GM12878 (cell line): ENCODE measurements at regions of chr12 and their contacts with region 1.

Region 1: DNA sequence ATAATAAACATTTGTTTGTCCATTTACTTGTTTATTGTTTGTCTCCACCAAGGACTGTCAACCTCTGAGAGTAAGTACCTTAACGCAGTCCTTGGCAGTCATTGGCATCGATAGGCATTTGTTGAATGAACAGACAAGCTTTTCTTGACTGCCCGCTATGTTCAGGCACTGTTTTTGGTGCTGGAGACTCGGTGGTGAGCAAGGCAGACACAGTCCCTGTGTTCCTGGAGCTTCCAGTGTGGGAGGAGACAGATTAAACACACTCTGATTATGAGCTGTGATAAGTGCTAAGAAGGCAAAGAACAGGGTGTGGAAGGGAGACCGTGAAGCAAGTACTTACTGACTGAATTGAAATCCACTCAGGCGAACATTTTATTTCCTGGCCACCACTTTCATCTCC is 1.2 kb downstream of the ATP6V0A2 start:
- DNase-seq: no peak
- ATAC-seq: peak; percentile 9
- H3K4me3 ChIP-seq: peak overlapping the region; percentile 84
- H3K27ac ChIP-seq: peak overlapping the region; percentile 91
- H3K4me1 ChIP-seq: peaks cover 15% of the 10 kb centered on the region
- H3K27me3 ChIP-seq: no peaks in the 10 kb centered on the region
- CTCF ChIP-seq: no peak
- EP300 ChIP-seq: no peak
- POLR2A ChIP-seq: no peak
- RAD21 ChIP-seq: no peak

Region 2: GRCh38 chr12:123633379-123634141 is 79.8 kb before region 1 on chr12 and contains the starts of genes EIF2B1 and GTF2H3:
- CTCF ChIA-PET with region 1: interaction called, 6 read pairs
- POLR2A ChIA-PET with region 1: interaction called, 8 read pairs
- RAD21 ChIA-PET with region 1: interaction called, 6 read pairs
- SMC1A ChIA-PET with region 1: interaction called, 9 read pairs
- in situ Hi-C with region 1: no loop called
- intact Hi-C with region 1: loop called (anchors 2 kb)
- DNase-seq: peak; percentile 92
- ATAC-seq: peak; percentile 98
- H3K4me3 ChIP-seq: peak within 1 kb of the TSS; percentile 97
- H3K27ac ChIP-seq: peak within 1 kb of the TSS; percentile 87
- H3K4me1 ChIP-seq: no peaks in the 10 kb centered on the region
- H3K27me3 ChIP-seq: no peaks in the 10 kb centered on the region
- CTCF ChIP-seq: no peak
- EP300 ChIP-seq: peak in 1 of 2 experiments; percentile 61; a peak in 1 of 4 replicates
- POLR2A ChIP-seq: peak; percentile 98
- RAD21 ChIP-seq: no peak; the same call in 1 of the 2 replicates
- polyA plus RNA-seq, gene EIF2B1: 17.6 to 25.9 TPM
- polyA plus RNA-seq, gene GTF2H3: 20.6 to 31.1 TPM

Region 3: GRCh38 chr12:123655420-123655819 is 58.0 kb before region 1 on chr12:
- CTCF ChIA-PET with region 1: interaction called, 9 read pairs
- POLR2A ChIA-PET with region 1: interaction called, 56 read pairs
- RAD21 ChIA-PET with region 1: interaction called, 26 read pairs
- SMC1A ChIA-PET with region 1: interaction called, 32 read pairs
- in situ Hi-C with region 1: no loop called
- intact Hi-C with region 1: loop called (anchors 5 kb)
- DNase-seq: peak; percentile 48
- ATAC-seq: peak; percentile 97
- H3K4me3 ChIP-seq: no peak overlapping the region
- H3K27ac ChIP-seq: peak overlapping the region; percentile 67
- H3K4me1 ChIP-seq: peaks cover 33% of the 10 kb centered on the region
- H3K27me3 ChIP-seq: no peaks in the 10 kb centered on the region
- CTCF ChIP-seq: no peak
- EP300 ChIP-seq: no peak; a peak in 1 of 4 replicates
- POLR2A ChIP-seq: no peak
- RAD21 ChIP-seq: no peak

Region 4: GRCh38 chr12:123723765-123724164 is 10.4 kb after region 1 on chr12:
- CTCF ChIA-PET with region 1: interaction called, 3 read pairs
- POLR2A ChIA-PET with region 1: interaction called, 17 read pairs
- RAD21 ChIA-PET with region 1: interaction called, 8 read pairs
- SMC1A ChIA-PET with region 1: interaction called, 28 read pairs
- in situ Hi-C with region 1: no loop called
- intact Hi-C with region 1: no loop called
- DNase-seq: no peak
- ATAC-seq: peak; percentile 69
- H3K4me3 ChIP-seq: no peak overlapping the region
- H3K27ac ChIP-seq: peak overlapping the region; percentile 50
- H3K4me1 ChIP-seq: peaks cover 6% of the 10 kb centered on the region; the same call in 1 of the 2 replicates
- H3K27me3 ChIP-seq: no peaks in the 10 kb centered on the region
- CTCF ChIP-seq: no peak
- EP300 ChIP-seq: no peak
- POLR2A ChIP-seq: no peak
- RAD21 ChIP-seq: no peak

Region 5: GRCh38 chr12:123733229-123733628 is 19.8 kb after region 1 on chr12:
- CTCF ChIA-PET with region 1: no interaction called
- POLR2A ChIA-PET with region 1: interaction called, 7 read pairs
- RAD21 ChIA-PET with region 1: interaction called, 10 read pairs
- SMC1A ChIA-PET with region 1: interaction called, 23 read pairs
- in situ Hi-C with region 1: no loop called
- intact Hi-C with region 1: no loop called
- DNase-seq: no peak
- ATAC-seq: no peak
- H3K4me3 ChIP-seq: no peak overlapping the region
- H3K27ac ChIP-seq: no peak overlapping the region
- H3K4me1 ChIP-seq: peaks cover 17% of the 10 kb centered on the region
- H3K27me3 ChIP-seq: no peaks in the 10 kb centered on the region
- CTCF ChIP-seq: no peak
- EP300 ChIP-seq: no peak
- POLR2A ChIP-seq: no peak
- RAD21 ChIP-seq: no peak

Region 6: GRCh38 chr12:123743002-123743401 is 29.6 kb after region 1 on chr12:
- CTCF ChIA-PET with region 1: no interaction called
- POLR2A ChIA-PET with region 1: interaction called, 6 read pairs
- RAD21 ChIA-PET with region 1: interaction called, 10 read pairs
- SMC1A ChIA-PET with region 1: interaction called, 3 read pairs
- in situ Hi-C with region 1: no loop called
- intact Hi-C with region 1: no loop called
- DNase-seq: no peak
- ATAC-seq: peak; percentile 46
- H3K4me3 ChIP-seq: no peak overlapping the region
- H3K27ac ChIP-seq: peak overlapping the region; percentile 63
- H3K4me1 ChIP-seq: peaks cover 17% of the 10 kb centered on the region
- H3K27me3 ChIP-seq: no peaks in the 10 kb centered on the region
- CTCF ChIP-seq: no peak
- EP300 ChIP-seq: no peak
- POLR2A ChIP-seq: no peak
- RAD21 ChIP-seq: no peak

Region 7: DNA sequence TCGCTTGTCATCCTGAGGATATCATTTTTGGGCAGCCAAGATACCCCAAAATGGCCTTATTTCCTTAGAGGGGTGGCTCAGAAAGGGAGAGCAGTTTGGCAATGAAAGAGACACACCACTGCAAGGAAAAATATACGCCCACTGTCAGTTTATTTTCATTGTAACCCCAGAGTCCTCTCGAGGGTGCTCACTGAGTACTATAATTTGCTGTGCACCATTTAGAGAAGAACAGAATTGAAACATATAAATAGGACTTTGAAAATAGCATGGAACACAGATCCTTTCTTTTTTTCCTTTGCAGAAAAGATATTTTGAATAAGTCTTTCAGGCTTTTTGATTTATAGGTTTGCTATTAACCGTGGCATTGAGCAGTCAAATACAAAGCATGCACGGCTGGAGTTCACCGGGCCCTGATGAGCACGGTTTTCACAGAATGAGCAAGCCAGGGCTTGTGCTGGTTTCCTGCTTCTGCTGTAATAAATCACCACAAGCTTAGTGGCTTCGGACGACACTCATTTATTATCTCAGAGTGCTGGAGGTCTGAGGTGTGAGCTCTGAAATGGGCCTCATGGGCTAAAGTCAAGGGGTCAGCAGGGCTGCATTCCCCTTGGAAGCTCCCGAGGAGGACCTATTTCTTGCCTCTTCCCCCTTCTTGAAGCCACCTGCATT is 411.9 kb after region 1 on chr12:
- CTCF ChIA-PET with region 1: no interaction called
- POLR2A ChIA-PET with region 1: no interaction called
- RAD21 ChIA-PET with region 1: no interaction called
- SMC1A ChIA-PET with region 1: no interaction called
- in situ Hi-C with region 1: no loop called
- intact Hi-C with region 1: no loop called
- DNase-seq: peak; percentile 72
- ATAC-seq: peak; percentile 93
- H3K4me3 ChIP-seq: no peak overlapping the region
- H3K27ac ChIP-seq: peak overlapping the region; percentile 7
- H3K4me1 ChIP-seq: peaks cover 35% of the 10 kb centered on the region
- H3K27me3 ChIP-seq: no peaks in the 10 kb centered on the region
- CTCF ChIP-seq: no peak
- EP300 ChIP-seq: peak; percentile 58 to 82; a peak in 2 of 4 replicates
- POLR2A ChIP-seq: no peak
- RAD21 ChIP-seq: 0 out of 2 replicates have a peak, but pooled peaks have one; percentile 3